ENCODE measurements at regions of chr13 and their contacts with region 1.

Region 1: DNA sequence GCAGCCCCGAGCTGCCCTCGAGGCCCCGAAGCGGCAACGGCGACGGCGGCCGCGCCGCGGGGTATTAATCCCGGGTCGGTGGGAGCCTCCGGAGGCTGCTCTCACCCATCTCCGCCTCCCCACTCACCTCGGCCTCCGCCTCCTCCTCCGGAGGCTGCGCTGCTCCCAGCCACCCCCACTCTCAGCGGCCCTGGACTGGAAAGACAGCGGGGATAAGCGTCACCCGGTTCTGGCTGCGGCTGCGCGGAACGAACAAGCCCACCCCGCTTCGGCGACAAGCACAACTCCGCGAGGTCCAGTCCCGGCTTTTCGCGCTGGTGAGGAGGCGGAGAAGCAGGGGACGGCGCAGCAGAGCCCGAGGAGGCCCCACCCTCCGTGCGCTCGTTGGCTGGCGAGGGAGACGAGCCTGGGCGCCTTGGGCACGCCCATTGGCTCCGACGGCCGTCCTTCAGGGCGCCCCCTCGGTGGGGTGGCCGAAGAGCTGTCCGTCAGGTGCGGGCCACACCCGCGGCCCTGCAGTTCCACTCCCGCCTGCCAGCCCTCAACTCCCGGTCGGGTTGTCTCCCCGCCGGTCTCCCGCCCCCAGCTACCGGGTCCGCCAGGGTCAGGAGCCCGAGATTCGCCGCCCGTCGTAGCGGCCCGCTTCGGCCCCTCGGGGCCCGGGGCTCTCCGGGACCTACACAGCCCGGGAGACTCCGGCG is at the start of gene ZMYM5:
- DNase-seq: peak; percentile 94 to 97
- ATAC-seq: peak; percentile 84 to 95 (median 88)
- H3K4me3 ChIP-seq: peak within 1 kb of the TSS; percentile 64
- H3K4me3 Mint-ChIP-seq: peak within 1 kb of the TSS; percentile 95
- H3K27ac ChIP-seq: peak within 1 kb of the TSS; percentile 98
- H3K27ac Mint-ChIP-seq: peak within 1 kb of the TSS; percentile 91 to 94
- H3K4me1 ChIP-seq: peaks cover 25% of the 10 kb centered on the region
- H3K4me1 Mint-ChIP-seq: peaks cover 35 to 38% of the 10 kb centered on the region in 2 donors
- H3K27me3 ChIP-seq: no peaks in the 10 kb centered on the region
- H3K27me3 Mint-ChIP-seq: no peaks in the 10 kb centered on the region
- CTCF ChIP-seq: no peak
- total RNA-seq, gene ZMYM5: 29.5 to 37.4 (median 36.0) TPM

Region 2: GRCh38 chr13:19633479-19634255 is 229.8 kb before region 1 on chr13 and contains the start of gene MPHOSPH8:
- intact Hi-C with region 1: loop called (anchors 10 kb)
- DNase-seq: peak; percentile 89 to 97
- ATAC-seq: peak; percentile 96 to 99 (median 97)
- H3K4me3 ChIP-seq: peak within 1 kb of the TSS; percentile 80
- H3K4me3 Mint-ChIP-seq: peak within 1 kb of the TSS; percentile 100
- H3K27ac ChIP-seq: peak within 1 kb of the TSS; percentile 89
- H3K27ac Mint-ChIP-seq: peak within 1 kb of the TSS; percentile 99
- H3K4me1 ChIP-seq: peaks cover 17% of the 10 kb centered on the region
- H3K4me1 Mint-ChIP-seq: peaks cover 35 to 41% of the 10 kb centered on the region in 2 donors
- H3K27me3 ChIP-seq: no peaks in the 10 kb centered on the region
- H3K27me3 Mint-ChIP-seq: peaks cover 0 to 16% of the 10 kb centered on the region in 2 donors
- CTCF ChIP-seq: no peak
- total RNA-seq, gene MPHOSPH8: 54.2 to 64.7 (median 59.8) TPM

Region 3: DNA sequence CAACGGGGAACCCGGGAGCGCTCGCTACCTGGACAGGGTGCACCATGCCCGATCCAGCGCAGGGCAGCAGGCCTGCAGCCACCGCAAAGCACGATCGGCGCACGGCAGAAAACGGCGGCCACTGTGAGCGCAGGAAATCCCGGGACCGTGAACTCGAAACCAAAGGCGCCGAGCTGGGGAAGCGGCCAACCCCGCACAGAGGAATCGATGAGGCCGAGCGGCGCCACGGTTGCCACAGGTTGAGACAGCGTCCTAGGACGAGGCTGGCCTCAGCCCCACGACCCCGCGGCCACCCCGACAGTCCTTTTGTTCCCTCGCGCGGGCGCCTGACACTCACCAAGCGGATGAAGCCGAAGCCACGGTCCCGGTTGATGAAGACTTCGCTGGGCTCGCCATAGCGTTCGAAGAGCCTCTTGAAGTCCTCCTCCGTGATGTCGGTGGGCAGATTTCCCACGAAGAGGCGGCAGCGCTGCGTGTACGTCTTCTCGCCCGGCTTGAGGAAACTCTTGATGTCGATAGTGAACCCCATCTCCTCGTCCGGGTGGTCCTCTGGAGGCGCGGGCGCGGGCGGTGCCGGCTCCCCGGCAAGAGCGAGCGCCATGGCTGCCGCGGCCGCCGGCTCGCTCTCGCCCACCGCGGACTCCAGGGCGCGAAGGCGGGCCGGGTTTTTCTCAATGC is 81.3 kb before region 1 on chr13:
- intact Hi-C with region 1: loop called (anchors 2 kb)
- DNase-seq: peak; percentile 55 to 74
- ATAC-seq: peak; percentile 58 to 69 (median 64)
- H3K4me3 ChIP-seq: peak overlapping the region; percentile 96
- H3K4me3 Mint-ChIP-seq: peak overlapping the region; percentile 99
- H3K27ac ChIP-seq: peak overlapping the region; percentile 93
- H3K27ac Mint-ChIP-seq: peak overlapping the region; percentile 98 to 99
- H3K4me1 ChIP-seq: peaks cover 13% of the 10 kb centered on the region
- H3K4me1 Mint-ChIP-seq: peaks cover 6 to 7% of the 10 kb centered on the region in 2 donors
- H3K27me3 ChIP-seq: no peaks in the 10 kb centered on the region
- H3K27me3 Mint-ChIP-seq: no peaks in the 10 kb centered on the region
- CTCF ChIP-seq: no peak

Region 4: DNA sequence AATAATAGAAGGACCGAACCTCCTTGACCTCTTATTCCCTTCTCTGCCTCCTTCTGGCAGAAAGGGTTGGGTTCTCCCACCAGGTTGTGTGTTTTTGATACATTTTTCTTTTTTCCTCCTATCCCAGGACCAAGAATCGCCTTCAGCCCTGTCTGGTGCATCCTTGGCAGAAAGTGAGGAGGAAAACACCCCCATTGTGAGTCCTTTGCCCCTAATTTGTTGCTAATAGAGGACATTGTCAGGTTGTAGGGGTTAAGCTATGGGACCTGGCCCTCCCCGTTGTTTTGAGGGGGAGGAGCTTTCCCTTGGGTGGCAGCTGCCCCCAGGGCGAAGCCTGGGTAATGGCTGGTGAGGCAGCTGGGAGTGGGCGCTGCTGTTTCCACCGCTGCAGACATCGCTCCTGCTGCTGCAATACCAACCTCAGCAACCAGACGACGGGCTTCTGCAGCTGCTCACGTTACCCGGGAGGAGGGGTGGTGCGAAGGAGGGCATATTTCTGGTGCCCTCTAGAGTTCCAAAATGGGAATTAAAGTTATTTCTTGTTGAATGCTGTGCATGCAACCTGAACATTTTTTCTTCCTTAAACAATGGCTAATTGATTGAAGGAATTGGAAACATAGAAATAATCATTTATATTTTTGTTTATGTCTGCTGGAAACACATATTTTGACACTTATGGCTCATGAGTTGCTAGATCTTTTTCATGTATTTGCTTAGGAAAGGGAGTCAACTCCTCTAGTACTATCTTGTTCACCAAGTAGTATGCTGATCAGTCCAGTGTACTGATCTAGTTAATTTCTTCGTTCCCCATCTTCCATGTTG is 96.6 kb after region 1 on chr13:
- intact Hi-C with region 1: loop called (anchors 1 kb)
- DNase-seq: peak; percentile 73 to 95
- ATAC-seq: peak; percentile 50 to 68 (median 52)
- H3K4me3 ChIP-seq: peak overlapping the region; percentile 82
- H3K4me3 Mint-ChIP-seq: peak overlapping the region; percentile 95
- H3K27ac ChIP-seq: peak overlapping the region; percentile 86
- H3K27ac Mint-ChIP-seq: peak overlapping the region; percentile 91 to 96
- H3K4me1 ChIP-seq: peaks cover 8% of the 10 kb centered on the region
- H3K4me1 Mint-ChIP-seq: peaks cover 23 to 29% of the 10 kb centered on the region in 2 donors
- H3K27me3 ChIP-seq: no peaks in the 10 kb centered on the region
- H3K27me3 Mint-ChIP-seq: peaks cover 0 to 3% of the 10 kb centered on the region in 2 donors
- CTCF ChIP-seq: peak; percentile 83

Measured in natural killer cell (primary cell).